ENCODE measurements at regions of chr17 and their contacts with region 1.

Region 1: GRCh38 chr17:21511363-21512198 is 135.4 kb downstream of the KCNJ12 start:
- DNase-seq: peak; percentile 72
- ATAC-seq: peak; percentile 87
- H3K4me3 Mint-ChIP-seq: peak overlapping the region; percentile 38
- H3K27ac Mint-ChIP-seq: no peak overlapping the region
- H3K4me1 Mint-ChIP-seq: peaks cover 20% of the 10 kb centered on the region
- H3K27me3 Mint-ChIP-seq: peaks cover 46% of the 10 kb centered on the region

Region 2: GRCh38 chr17:21098934-21099689 is 412.5 kb before region 1 on chr17:
- CTCF ChIA-PET with region 1: interaction called, 10 read pairs
- DNase-seq: peak; percentile 92
- ATAC-seq: peak; percentile 99
- H3K4me3 Mint-ChIP-seq: peak overlapping the region; percentile 88
- H3K27ac Mint-ChIP-seq: peak overlapping the region; percentile 94
- H3K4me1 Mint-ChIP-seq: peaks cover 18% of the 10 kb centered on the region
- H3K27me3 Mint-ChIP-seq: no peaks in the 10 kb centered on the region

Region 3: GRCh38 chr17:21126645-21127510 is 384.7 kb before region 1 on chr17 and contains the start of gene DHRS7B:
- CTCF ChIA-PET with region 1: interaction called, 44 read pairs
- DNase-seq: peak; percentile 97
- ATAC-seq: peak; percentile 95
- H3K4me3 Mint-ChIP-seq: peak within 1 kb of the TSS; percentile 98
- H3K27ac Mint-ChIP-seq: peak within 1 kb of the TSS; percentile 95
- H3K4me1 Mint-ChIP-seq: peaks cover 29% of the 10 kb centered on the region
- H3K27me3 Mint-ChIP-seq: peaks cover under 1% of the 10 kb centered on the region
- total RNA-seq, gene DHRS7B: 18.8 to 19.0 TPM

Region 4: DNA sequence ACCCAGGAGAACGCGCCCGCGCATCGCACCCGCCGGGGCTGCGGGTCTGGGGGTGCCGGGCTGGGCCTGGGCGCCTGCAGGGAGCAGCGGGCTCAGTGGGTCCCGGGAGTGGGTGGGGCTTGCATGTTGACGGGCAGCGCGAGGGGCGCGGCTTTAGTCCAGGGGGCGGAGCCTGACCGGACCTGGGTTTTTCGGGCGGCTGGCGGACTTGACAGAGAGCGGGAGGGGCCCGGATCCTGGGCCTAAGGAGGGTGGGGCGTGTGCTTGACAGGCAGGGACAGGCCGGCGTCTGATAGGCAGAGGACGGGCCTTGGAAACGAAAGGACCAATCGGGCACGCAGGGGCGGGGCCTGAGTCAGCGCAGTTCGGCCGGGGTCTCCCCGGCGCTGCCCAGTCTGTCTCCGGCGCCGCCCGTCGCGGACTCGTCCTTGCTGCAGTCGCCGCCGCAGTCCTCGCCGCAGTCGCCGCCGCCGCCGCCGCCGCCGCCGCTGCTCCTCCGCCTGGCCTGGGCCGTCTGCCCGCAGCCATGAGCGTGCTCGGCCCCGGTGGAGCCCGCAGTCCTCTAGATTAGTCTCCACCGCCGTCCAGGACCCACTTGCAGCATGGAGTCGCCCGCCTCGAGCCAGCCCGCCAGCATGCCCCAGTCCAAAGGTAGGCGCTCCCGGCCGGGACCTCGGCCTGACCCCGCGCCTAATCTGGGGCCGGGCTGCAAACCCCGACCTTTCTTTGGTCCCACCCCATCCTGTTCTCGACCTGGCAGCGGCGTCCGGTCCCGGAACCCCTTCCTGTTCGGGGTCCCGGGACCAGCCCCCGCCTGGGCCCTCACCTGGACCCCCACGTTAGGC is 227.0 kb before region 1 on chr17 and contains the start of gene MAP2K3:
- CTCF ChIA-PET with region 1: interaction called, 25 read pairs
- DNase-seq: peak; percentile 99
- ATAC-seq: peak; percentile 83
- H3K4me3 Mint-ChIP-seq: peak within 1 kb of the TSS; percentile 87
- H3K27ac Mint-ChIP-seq: peak within 1 kb of the TSS; percentile 93
- H3K4me1 Mint-ChIP-seq: peaks cover 43% of the 10 kb centered on the region
- H3K27me3 Mint-ChIP-seq: no peaks in the 10 kb centered on the region
- total RNA-seq, gene MAP2K3: 65.5 to 97.3 TPM

Region 5: GRCh38 chr17:21524211-21524591 is 12.6 kb after region 1 on chr17:
- CTCF ChIA-PET with region 1: interaction called, 14 read pairs
- DNase-seq: no peak
- ATAC-seq: no peak
- H3K4me3 Mint-ChIP-seq: no peak overlapping the region
- H3K27ac Mint-ChIP-seq: no peak overlapping the region
- H3K4me1 Mint-ChIP-seq: no peaks in the 10 kb centered on the region
- H3K27me3 Mint-ChIP-seq: peaks cover 9% of the 10 kb centered on the region

Region 6: DNA sequence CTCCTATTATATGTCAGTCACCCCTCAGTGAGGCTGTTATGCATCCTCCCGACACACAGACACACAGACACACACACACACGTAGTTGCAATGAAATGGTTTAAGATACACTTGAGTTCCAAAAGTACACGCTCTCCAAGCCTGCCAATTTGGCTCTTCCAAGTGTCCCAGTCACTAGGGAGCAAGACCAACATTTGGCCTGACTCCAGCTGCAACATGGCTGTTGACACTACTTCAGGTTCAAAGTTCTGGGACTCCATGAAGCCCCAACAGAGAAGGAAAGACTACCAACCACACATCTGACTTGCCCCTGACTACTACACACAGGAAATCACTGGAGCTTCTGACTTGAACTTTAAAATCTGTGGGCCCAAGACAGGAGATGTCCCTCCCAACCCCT is 52.7 kb after region 1 on chr17:
- CTCF ChIA-PET with region 1: no interaction called
- DNase-seq: no peak
- ATAC-seq: no peak
- H3K4me3 Mint-ChIP-seq: no peak overlapping the region
- H3K27ac Mint-ChIP-seq: no peak overlapping the region
- H3K4me1 Mint-ChIP-seq: no peaks in the 10 kb centered on the region
- H3K27me3 Mint-ChIP-seq: peaks cover 7% of the 10 kb centered on the region